Pancreas (tissue), 10 donors: ENCODE measurements at regions of chr7 and their contacts with region 1.

Region 1: DNA sequence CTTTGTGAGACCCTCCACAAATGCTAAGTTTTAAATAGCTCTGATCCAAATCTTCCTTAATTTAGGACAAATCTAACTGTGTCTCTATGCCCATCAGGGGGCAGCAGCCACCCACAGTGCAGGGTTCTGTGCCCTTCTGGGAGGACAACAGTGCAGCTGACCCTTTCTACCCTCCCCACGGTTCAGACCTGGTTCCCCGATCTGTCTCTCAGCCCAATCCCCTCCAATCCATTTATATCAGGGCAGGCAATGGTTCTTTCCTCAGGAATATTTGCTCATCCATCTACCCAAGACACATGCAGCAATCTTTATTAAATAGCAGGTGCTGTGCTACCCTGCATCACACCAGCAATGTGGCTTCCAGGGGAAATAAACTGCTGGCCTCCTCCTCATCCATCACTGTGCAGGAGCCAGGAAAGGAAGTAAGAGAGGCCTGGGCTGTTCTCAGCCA is 4.0 kb upstream of the RBM28 start:
- DNase-seq: peak in 1 of 6 donors; percentile 65
- ATAC-seq: peak in 2 of 4 donors; percentile 26 to 43
- H3K4me3 ChIP-seq: no peak overlapping the region
- H3K27ac ChIP-seq: no peak overlapping the region
- H3K4me1 ChIP-seq: peaks cover 0 to 8% (median under 1%) of the 10 kb centered on the region in 3 donors
- H3K27me3 ChIP-seq: peaks cover 0 to 4% (median 0%) of the 10 kb centered on the region in 4 donors
- CTCF ChIP-seq: peak in 3 of 4 donors; percentile 20 to 29 (median 28)

Region 2: GRCh38 chr7:128381161-128381821 is 33.6 kb after region 1 on chr7:
- intact Hi-C with region 1: loop called in 2 of 3 experiments (anchors 5 kb)
- DNase-seq: peak in 1 of 6 donors; percentile 24
- ATAC-seq: peak in 1 of 4 donors; percentile 44
- H3K4me3 ChIP-seq: no peak overlapping the region
- H3K27ac ChIP-seq: no peak overlapping the region
- H3K4me1 ChIP-seq: no peaks in the 10 kb centered on the region
- H3K27me3 ChIP-seq: no peaks in the 10 kb centered on the region
- CTCF ChIP-seq: peak in 1 of 4 donors; percentile 24

Region 3: DNA sequence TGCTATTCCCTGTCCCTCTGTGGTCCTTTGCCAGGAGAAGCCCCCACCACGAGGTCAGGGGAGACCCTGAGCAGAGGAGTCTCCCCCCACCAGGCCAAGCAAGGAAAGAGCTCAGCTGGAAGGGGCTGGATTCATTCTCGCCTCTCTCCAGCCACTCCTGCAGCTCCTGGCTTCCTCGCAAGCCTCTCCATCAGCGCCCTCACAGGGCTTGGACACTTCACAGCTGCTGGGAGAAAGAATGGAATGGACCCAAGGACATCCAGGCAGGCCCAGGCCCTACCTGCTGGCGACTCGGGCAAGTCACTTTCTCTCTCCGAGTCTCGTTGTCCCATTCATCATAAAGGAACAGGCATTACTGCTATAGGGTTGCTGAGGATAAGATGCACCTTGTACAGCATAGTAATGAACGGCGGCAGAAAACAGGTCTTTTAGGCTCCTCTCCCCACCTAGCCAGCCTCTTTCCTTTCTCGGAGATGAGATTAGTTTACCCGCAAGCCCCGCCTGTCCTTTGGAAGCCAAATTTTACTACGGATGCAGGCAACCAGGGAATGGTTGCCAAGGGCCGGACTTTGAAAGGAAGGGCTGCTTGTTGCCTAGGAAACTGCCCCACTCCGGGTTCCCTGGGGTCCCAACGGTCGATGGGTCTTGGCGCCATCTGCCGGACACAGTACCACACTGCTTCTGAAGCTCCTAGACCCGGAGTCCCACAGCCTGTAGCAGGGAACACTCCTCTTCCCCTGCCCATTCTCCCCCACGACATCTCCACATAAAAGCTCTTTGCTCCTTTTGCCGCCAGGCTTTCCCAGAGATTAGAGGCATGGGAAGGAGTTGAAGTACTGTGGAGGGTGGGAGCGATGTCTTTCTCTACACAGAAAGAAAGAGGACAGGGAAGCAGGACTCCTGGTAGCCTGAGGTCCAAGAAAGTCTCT is 39.8 kb after region 1 on chr7:
- intact Hi-C with region 1: loop called in 2 of 3 experiments (anchors 5 kb)
- DNase-seq: peak; percentile 44 to 88 (median 70)
- ATAC-seq: peak; percentile 83 to 94 (median 92)
- H3K4me3 ChIP-seq: no peak overlapping the region
- H3K27ac ChIP-seq: no peak overlapping the region
- H3K4me1 ChIP-seq: no peaks in the 10 kb centered on the region
- H3K27me3 ChIP-seq: no peaks in the 10 kb centered on the region
- CTCF ChIP-seq: peak; percentile 68 to 80 (median 76)